ENCODE measurements at regions of chr9 and their contacts with region 1.

Region 1: GRCh38 chr9:72592502-72593403 is 71.3 kb downstream of the TMC1 start:
- DNase-seq: peak; percentile 41
- H3K4me3 Mint-ChIP-seq: no peak overlapping the region
- H3K27ac Mint-ChIP-seq: no peak overlapping the region
- H3K4me1 Mint-ChIP-seq: peaks cover 6% of the 10 kb centered on the region
- H3K27me3 Mint-ChIP-seq: no peaks in the 10 kb centered on the region

Region 2: DNA sequence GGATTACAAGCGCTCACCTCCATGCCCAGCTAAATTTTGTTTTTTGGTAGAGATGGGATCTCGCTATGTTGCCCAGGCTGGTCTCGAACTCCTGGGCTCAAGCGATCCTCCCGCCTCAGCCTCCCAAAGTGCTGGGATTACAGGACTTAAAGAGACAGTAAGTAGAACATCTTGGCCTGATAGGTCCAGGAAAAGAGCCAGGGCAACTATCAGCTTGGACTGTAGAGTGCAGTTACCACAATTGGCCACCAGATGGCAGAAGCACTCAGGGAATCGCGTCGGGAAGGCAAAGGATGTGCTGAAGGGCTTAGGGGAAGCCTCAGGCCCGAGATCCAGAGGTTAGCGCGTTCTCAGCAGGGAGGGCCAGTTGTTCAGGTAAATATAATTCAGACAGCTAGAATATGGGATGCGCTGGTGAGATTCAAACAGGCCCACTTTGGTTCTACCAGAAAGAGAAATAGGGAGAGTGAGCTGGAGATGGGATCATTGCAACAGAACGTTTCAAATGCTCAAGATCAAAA is 553.8 kb before region 1 on chr9:
- CTCF ChIA-PET with region 1: interaction called, 4 read pairs
- intact Hi-C with region 1: loop called (anchors 2 kb)
- DNase-seq: peak; percentile 80
- H3K4me3 Mint-ChIP-seq: no peak overlapping the region
- H3K27ac Mint-ChIP-seq: no peak overlapping the region
- H3K4me1 Mint-ChIP-seq: peaks cover 4% of the 10 kb centered on the region
- H3K27me3 Mint-ChIP-seq: peaks cover 6% of the 10 kb centered on the region

Region 3: GRCh38 chr9:72203205-72203803 is 389.4 kb before region 1 on chr9:
- CTCF ChIA-PET with region 1: no interaction called
- intact Hi-C with region 1: loop called (anchors 5 kb)
- DNase-seq: peak; percentile 18
- H3K4me3 Mint-ChIP-seq: no peak overlapping the region
- H3K27ac Mint-ChIP-seq: no peak overlapping the region
- H3K4me1 Mint-ChIP-seq: no peaks in the 10 kb centered on the region
- H3K27me3 Mint-ChIP-seq: peaks cover 3% of the 10 kb centered on the region

Region 4: DNA sequence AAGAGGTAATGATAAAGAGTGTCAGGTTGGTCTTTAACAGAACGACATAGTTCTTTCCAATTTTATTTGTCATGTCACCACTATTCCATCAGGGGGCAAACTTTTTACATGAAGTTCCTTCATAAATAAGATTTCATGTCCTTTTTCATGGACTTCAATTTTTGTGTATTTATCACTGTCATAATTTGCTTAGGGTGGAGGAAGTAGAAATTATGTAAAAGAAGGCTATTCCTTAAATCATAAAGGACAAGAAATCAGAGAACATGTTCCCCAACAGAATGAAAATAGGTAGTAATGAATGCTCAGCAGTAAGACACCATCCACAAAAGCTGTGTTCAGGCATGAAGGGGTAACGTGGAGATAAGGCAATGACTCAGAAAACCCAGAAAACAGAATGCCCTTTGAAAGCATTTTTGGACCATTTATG is 300.5 kb before region 1 on chr9:
- CTCF ChIA-PET with region 1: interaction called, 11 read pairs
- intact Hi-C with region 1: loop called (anchors 1 kb)
- DNase-seq: no peak
- H3K4me3 Mint-ChIP-seq: no peak overlapping the region
- H3K27ac Mint-ChIP-seq: no peak overlapping the region
- H3K4me1 Mint-ChIP-seq: peaks cover 2% of the 10 kb centered on the region
- H3K27me3 Mint-ChIP-seq: no peaks in the 10 kb centered on the region

Region 5: DNA sequence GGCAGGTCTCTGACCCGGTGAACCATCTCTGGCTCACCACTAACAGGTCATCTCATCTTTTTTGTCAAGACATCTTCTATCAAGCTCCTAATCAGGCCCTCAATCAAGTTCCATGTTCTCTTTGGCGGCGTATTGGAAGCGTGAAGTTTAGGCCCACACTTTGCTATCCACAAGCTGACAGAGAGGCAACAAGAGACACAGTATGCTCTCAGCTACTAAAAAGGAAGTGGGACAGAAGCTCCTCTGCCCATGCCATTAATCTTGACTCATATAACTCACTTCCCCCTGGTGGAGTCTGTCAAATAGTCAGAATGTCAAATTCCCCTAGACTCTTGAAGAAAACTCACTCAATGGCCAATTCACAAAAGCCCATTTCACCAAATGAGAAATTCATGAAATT is 148.9 kb before region 1 on chr9:
- CTCF ChIA-PET with region 1: no interaction called
- intact Hi-C with region 1: loop called (anchors 2 kb)
- DNase-seq: peak; percentile 12
- H3K4me3 Mint-ChIP-seq: no peak overlapping the region
- H3K27ac Mint-ChIP-seq: no peak overlapping the region
- H3K4me1 Mint-ChIP-seq: peaks cover 14% of the 10 kb centered on the region
- H3K27me3 Mint-ChIP-seq: no peaks in the 10 kb centered on the region

Region 6: DNA sequence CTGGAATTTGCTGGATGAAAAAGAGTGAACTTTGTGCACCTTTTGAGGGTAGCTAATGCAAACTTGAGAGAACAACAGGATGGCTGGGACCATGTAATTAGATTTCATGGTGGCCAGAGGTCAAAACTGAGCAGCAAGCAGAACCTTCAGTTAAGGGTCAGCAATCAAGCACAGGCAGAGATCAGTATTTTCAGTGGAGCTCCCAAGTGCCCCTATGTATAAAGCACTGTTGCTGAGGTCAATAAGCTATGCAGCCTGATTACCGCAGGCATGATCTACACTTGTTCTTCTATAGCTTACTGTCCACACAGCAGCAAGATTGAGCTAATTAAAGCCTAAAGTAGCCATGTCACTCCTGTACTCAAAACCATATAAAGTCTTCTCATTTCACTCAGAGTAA is 133.4 kb before region 1 on chr9:
- CTCF ChIA-PET with region 1: no interaction called
- intact Hi-C with region 1: loop called (anchors 2 kb)
- DNase-seq: no peak
- H3K4me3 Mint-ChIP-seq: no peak overlapping the region
- H3K27ac Mint-ChIP-seq: no peak overlapping the region
- H3K4me1 Mint-ChIP-seq: peaks cover 7% of the 10 kb centered on the region
- H3K27me3 Mint-ChIP-seq: no peaks in the 10 kb centered on the region

Region 7: GRCh38 chr9:72633966-72634365 is 41.2 kb after region 1 on chr9:
- CTCF ChIA-PET with region 1: no interaction called
- intact Hi-C with region 1: no loop called
- DNase-seq: peak; percentile 9
- H3K4me3 Mint-ChIP-seq: no peak overlapping the region
- H3K27ac Mint-ChIP-seq: no peak overlapping the region
- H3K4me1 Mint-ChIP-seq: no peaks in the 10 kb centered on the region
- H3K27me3 Mint-ChIP-seq: no peaks in the 10 kb centered on the region

Region 8: GRCh38 chr9:73081979-73082657 is 489.4 kb after region 1 on chr9:
- CTCF ChIA-PET with region 1: no interaction called
- intact Hi-C with region 1: loop called (anchors 5 kb)
- DNase-seq: no peak
- H3K4me3 Mint-ChIP-seq: no peak overlapping the region
- H3K27ac Mint-ChIP-seq: no peak overlapping the region
- H3K4me1 Mint-ChIP-seq: no peaks in the 10 kb centered on the region
- H3K27me3 Mint-ChIP-seq: peaks cover 6% of the 10 kb centered on the region